ENCODE measurements at regions of chr20 and their contacts with region 1.

Region 1: DNA sequence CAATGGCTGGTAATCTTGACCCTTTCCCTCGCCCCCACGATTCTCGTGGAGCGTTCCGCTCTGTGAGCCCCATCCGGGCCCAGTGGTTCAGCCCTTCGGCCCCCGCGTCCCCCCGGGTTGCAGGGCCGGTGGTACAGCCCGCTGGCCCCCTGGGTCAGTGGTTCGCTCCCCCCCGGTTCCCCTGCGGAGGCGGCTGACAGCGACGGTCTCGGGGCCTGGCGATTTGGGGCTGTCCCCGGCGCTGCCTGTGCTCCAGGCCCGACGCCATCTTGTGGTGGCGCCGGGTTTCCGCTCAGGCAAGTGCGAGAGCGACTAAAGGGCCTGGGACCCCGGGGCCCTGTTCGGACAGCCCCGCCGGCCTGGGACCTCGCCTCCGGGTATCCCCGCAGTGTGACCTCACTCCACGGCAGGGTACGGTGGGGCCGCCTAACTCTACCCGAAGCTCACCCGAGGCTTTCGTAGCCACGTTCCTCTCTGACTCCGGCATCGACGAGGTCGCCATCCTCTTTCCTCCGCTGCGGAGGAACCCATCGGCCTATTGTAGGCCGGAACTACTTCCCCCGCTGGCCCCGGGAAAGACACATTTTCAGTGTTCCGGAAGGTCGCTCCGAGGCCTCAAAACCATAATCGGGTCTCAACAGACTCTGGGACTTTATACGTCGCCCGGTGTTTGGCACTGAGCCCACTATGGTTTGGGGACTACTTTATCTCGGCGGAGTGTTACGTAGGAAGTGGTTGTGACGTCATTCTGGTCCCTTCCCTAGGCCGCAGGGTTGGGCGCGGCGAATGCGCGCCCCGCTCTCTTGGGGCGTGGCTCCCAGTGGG is at the start of gene ZNF335:
- DNase-seq: peak; percentile 97
- H3K4me3 ChIP-seq: peak within 1 kb of the TSS; percentile 84
- H3K27ac ChIP-seq: peak within 1 kb of the TSS; percentile 100
- H3K4me1 ChIP-seq: peaks cover 11% of the 10 kb centered on the region
- H3K27me3 ChIP-seq: no peaks in the 10 kb centered on the region
- CTCF ChIP-seq: no peak
- total RNA-seq, gene ZNF335: 31.9 and 32.9 TPM in 2 replicates

Region 2: GRCh38 chr20:45890985-45891983 is 80.6 kb before region 1 on chr20 and contains the starts of genes CTSA and NEURL2:
- CTCF ChIA-PET with region 1: no interaction called
- POLR2A ChIA-PET with region 1: no interaction called
- intact Hi-C with region 1: loop called (anchors 10 kb)
- DNase-seq: peak; percentile 88
- H3K4me3 ChIP-seq: peak within 1 kb of the TSS; percentile 71
- H3K27ac ChIP-seq: peak within 1 kb of the TSS; percentile 69
- H3K4me1 ChIP-seq: peaks cover 8% of the 10 kb centered on the region
- H3K27me3 ChIP-seq: no peaks in the 10 kb centered on the region
- CTCF ChIP-seq: no peak
- total RNA-seq, gene CTSA: 76.7 and 83.5 TPM in 2 replicates
- total RNA-seq, gene NEURL2: 3.2 and 3.3 TPM in 2 replicates

Region 3: GRCh38 chr20:45905505-45906079 is 66.3 kb before region 1 on chr20:
- CTCF ChIA-PET with region 1: no interaction called
- POLR2A ChIA-PET with region 1: no interaction called
- intact Hi-C with region 1: no loop called
- DNase-seq: no peak
- H3K4me3 ChIP-seq: no peak overlapping the region
- H3K27ac ChIP-seq: no peak overlapping the region
- H3K4me1 ChIP-seq: peaks cover 3% of the 10 kb centered on the region
- H3K27me3 ChIP-seq: no peaks in the 10 kb centered on the region
- CTCF ChIP-seq: no peak

Region 4: GRCh38 chr20:46017272-46017671 is 45.4 kb after region 1 on chr20:
- CTCF ChIA-PET with region 1: no interaction called
- POLR2A ChIA-PET with region 1: no interaction called
- intact Hi-C with region 1: no loop called
- DNase-seq: no peak
- H3K4me3 ChIP-seq: no peak overlapping the region
- H3K27ac ChIP-seq: no peak overlapping the region
- H3K4me1 ChIP-seq: peaks cover 15% of the 10 kb centered on the region
- H3K27me3 ChIP-seq: no peaks in the 10 kb centered on the region
- CTCF ChIP-seq: no peak

Measured in A673 (cell line).